MCF 10A (cell line): ENCODE measurements at regions of chr1 and their contacts with region 1.

Region 1: GRCh38 chr1:240004086-240004749 is 87.5 kb upstream of the FMN2 start:
- DNase-seq: peak; percentile 69
- H3K4me3 Mint-ChIP-seq: no peak overlapping the region
- H3K27ac Mint-ChIP-seq: no peak overlapping the region
- H3K4me1 Mint-ChIP-seq: peaks cover 9% of the 10 kb centered on the region
- H3K27me3 Mint-ChIP-seq: no peaks in the 10 kb centered on the region
- CTCF ChIP-seq: peak; percentile 96

Region 2: GRCh38 chr1:239939602-239940001 is 64.6 kb before region 1 on chr1:
- CTCF ChIA-PET with region 1: interaction called, 12 read pairs
- POLR2A ChIA-PET with region 1: interaction called, 4 read pairs
- intact Hi-C with region 1: no loop called
- DNase-seq: peak; percentile 23
- H3K4me3 Mint-ChIP-seq: no peak overlapping the region
- H3K27ac Mint-ChIP-seq: no peak overlapping the region
- H3K4me1 Mint-ChIP-seq: no peaks in the 10 kb centered on the region
- H3K27me3 Mint-ChIP-seq: no peaks in the 10 kb centered on the region
- CTCF ChIP-seq: no peak

Region 3: DNA sequence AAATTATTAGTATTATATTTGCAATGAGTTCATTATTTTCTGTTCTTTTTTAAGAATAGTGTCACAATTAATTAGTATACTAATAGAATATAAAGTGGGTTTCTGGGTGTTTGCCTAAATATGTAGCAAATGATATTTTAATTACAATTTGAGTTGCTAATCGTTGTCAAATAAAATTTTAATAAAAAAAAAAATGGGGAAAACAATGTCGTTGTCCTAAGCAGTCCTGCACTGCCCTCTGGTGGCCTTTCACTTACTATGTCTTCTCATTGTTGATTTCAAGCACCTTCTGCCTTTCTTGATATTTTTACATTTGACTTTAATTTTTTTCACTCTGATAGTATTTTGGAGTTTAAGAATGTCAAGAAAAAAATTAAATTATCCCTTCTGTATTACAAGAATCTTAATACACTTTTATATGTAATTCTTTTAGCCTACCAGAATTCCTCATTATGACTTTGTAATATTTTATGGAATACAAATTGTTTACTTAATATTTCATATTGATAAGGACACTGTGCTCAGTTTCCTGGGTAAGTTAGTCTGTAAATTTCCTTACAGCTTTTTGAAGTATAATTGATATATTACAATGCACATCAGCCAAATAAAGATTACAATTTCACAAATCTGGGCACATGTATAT is 17.0 kb before region 1 on chr1:
- CTCF ChIA-PET with region 1: interaction called, 97 read pairs
- POLR2A ChIA-PET with region 1: no interaction called
- intact Hi-C with region 1: no loop called
- DNase-seq: peak; percentile 75
- H3K4me3 Mint-ChIP-seq: no peak overlapping the region
- H3K27ac Mint-ChIP-seq: no peak overlapping the region
- H3K4me1 Mint-ChIP-seq: no peaks in the 10 kb centered on the region
- H3K27me3 Mint-ChIP-seq: no peaks in the 10 kb centered on the region
- CTCF ChIP-seq: peak; percentile 97

Region 4: DNA sequence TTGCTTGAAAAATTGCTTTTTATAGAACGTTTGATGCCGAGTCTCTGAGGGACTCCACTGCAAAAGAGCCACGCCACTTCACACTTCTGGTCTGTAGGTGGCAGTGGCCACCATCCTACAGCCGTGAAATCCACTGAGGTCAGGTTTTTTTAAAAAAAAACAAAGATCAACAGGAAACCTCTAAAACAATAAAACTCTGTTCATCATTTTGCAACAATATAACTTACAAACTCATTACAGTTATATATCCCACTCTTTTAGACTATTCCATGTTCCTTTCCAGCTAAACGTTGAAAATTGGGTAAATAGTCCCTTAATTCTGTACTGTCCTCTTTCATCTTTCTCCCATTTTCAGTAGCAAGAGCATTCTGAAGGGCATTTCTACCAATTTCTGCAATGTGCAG is 22.8 kb after region 1 on chr1:
- CTCF ChIA-PET with region 1: interaction called, 45 read pairs
- POLR2A ChIA-PET with region 1: no interaction called
- intact Hi-C with region 1: no loop called
- DNase-seq: peak; percentile 81
- H3K4me3 Mint-ChIP-seq: no peak overlapping the region
- H3K27ac Mint-ChIP-seq: no peak overlapping the region
- H3K4me1 Mint-ChIP-seq: peaks cover 13% of the 10 kb centered on the region
- H3K27me3 Mint-ChIP-seq: no peaks in the 10 kb centered on the region
- CTCF ChIP-seq: peak; percentile 100

Region 5: DNA sequence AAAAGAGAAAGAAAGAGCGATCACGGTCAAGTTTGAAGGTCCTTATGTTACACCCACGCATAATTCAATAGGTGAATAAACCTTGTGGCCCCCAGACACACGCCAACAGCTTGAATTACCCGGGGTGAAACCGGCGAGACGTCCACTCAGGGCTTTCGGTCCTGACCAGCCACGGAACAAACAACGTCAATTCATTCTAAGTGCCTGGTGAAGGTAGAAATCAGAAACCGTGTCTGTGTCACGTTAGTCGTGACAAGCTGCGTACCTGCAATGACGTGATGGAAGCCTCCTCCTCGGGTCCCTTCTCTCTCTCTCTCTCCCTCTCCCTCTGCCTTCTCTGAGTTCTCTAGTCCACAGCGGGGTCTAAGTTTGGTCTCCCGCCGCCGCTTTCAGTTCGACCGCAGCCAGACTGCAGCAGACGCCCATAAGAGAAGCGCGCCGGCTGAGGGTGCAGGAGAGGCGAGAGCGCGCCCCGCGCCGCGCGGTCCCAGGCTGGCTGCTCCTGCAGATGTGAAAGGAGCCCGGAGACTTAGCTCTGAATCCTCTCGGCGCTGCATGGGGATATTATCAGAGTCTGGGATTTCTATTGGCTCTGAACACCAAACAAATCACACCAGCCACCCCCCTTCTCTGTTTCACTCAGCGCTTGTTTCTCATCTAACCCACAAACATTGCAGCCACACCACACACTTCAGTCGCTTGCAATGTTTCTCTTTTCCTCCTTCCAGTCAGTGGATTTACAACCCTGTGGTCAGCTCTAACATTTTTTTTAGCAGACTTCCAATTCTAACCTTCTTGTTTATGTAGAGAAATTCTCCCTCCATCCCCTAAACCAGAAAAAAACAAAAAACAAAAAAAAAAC is 607.6 kb after region 1 on chr1 and contains the start of gene GREM2:
- CTCF ChIA-PET with region 1: interaction called, 14 read pairs
- POLR2A ChIA-PET with region 1: no interaction called
- intact Hi-C with region 1: no loop called
- DNase-seq: peak; percentile 72
- H3K4me3 Mint-ChIP-seq: peak within 1 kb of the TSS; percentile 86
- H3K27ac Mint-ChIP-seq: peak within 1 kb of the TSS; percentile 59
- H3K4me1 Mint-ChIP-seq: peaks cover 15% of the 10 kb centered on the region
- H3K27me3 Mint-ChIP-seq: no peaks in the 10 kb centered on the region
- CTCF ChIP-seq: no peak
- total RNA-seq, gene GREM2: 0.10 TPM in 1 of 2 replicates, not detected in the other